Calu3 (cell line): ENCODE measurements at regions of chr20 and their contacts with region 1.

Region 1: GRCh38 chr20:4592316-4593148 is 129.2 kb upstream of the PRND start:
- DNase-seq: peak; percentile 65
- H3K4me3 Mint-ChIP-seq: peak overlapping the region; percentile 31
- H3K27ac Mint-ChIP-seq: no peak overlapping the region
- H3K4me1 Mint-ChIP-seq: peaks cover 8% of the 10 kb centered on the region
- H3K27me3 Mint-ChIP-seq: peaks cover 31% of the 10 kb centered on the region
- CTCF ChIP-seq: peak; percentile 83

Region 2: DNA sequence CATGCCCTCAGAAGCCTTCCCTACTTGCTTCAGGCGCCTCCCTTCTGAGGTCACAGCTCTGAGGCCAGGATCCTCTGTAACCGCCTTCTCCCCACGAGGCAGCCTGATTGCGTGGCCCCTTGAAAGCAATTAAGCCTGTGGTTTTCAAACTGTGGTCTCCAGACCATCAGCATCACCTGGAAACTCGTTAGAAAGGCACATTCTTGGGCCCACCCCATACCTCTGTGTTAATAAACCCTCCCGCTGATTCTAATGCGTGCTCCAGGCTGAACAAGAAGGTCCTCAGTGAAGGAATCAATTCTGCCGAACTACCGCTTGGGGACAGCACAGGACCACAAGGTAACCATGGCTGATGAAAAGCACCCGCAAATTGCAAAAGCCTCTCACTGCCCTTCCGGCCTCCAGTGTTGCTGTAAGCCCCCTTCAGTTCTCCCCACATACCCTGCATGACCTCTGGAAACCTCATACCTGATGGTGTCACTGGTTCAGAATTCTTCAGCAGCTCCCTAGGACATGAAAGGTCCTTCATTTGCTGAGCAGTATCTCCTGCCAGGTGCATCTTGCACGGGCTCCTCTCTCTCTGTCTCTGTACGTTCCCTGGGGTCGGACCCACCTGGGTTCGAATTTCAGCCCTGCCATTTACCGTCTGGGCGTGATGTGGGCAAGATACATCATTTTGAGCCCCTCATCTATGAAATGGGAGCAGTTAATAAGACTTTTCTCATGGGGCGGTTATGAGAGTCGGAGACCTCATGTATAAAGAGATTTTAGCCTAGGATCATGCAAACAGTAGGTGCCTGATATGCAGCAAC is 483.8 kb before region 1 on chr20:
- CTCF ChIA-PET with region 1: no interaction called
- intact Hi-C with region 1: loop called (anchors 10 kb)
- DNase-seq: peak; percentile 58
- H3K4me3 Mint-ChIP-seq: no peak overlapping the region
- H3K27ac Mint-ChIP-seq: peak overlapping the region; percentile 83
- H3K4me1 Mint-ChIP-seq: peaks cover 23% of the 10 kb centered on the region
- H3K27me3 Mint-ChIP-seq: no peaks in the 10 kb centered on the region
- CTCF ChIP-seq: peak; percentile 83

Region 3: GRCh38 chr20:4626228-4626627 is 33.7 kb after region 1 on chr20:
- CTCF ChIA-PET with region 1: no interaction called
- intact Hi-C with region 1: no loop called
- DNase-seq: no peak
- H3K4me3 Mint-ChIP-seq: no peak overlapping the region
- H3K27ac Mint-ChIP-seq: no peak overlapping the region
- H3K4me1 Mint-ChIP-seq: no peaks in the 10 kb centered on the region
- H3K27me3 Mint-ChIP-seq: peaks cover 61% of the 10 kb centered on the region
- CTCF ChIP-seq: no peak